ENCODE measurements at regions of chr21 and their contacts with region 1.

Region 1: DNA sequence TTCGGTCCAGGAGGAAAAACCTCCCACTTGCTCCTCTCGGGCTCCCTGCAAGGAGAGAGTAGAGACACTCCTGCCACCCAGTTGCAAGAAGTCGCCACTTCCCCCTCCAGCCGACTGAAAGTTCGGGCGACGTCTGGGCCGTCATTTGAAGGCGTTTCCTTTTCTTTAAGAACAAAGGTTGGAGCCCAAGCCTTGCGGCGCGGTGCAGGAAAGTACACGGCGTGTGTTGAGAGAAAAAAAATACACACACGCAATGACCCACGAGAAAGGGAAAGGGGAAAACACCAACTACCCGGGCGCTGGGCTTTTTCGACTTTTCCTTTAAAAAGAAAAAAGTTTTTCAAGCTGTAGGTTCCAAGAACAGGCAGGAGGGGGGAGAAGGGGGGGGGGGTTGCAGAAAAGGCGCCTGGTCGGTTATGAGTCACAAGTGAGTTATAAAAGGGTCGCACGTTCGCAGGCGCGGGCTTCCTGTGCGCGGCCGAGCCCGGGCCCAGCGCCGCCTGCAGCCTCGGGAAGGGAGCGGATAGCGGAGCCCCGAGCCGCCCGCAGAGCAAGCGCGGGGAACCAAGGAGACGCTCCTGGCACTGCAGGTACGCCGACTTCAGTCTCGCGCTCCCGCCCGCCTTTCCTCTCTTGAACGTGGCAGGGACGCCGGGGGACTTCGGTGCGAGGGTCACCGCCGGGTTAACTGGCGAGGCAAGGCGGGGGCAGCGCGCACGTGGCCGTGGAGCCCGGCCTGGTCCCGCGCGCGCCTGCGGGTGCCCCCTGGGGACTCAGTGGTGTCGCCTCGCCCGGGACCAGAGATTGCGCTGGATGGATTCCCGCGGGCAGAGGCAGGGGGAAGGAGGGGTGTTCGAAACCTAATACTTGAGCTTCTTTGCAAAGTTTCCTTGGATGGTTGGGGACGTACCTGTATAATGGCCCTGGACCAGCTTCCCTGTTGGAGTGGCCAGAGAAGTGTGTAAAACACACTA is 45.3 kb downstream of the MRPL39 start:
- DNase-seq: peak; percentile 40 to 72 (median 47)
- ATAC-seq: peak in 3 of 4 donors; percentile 80 to 83 (median 83)
- H3K4me3 ChIP-seq: peak overlapping the region; percentile 30 to 78 (median 56)
- H3K27ac ChIP-seq: peak overlapping the region in 6 of 12 donors; percentile 16 to 78 (median 46)
- H3K4me1 ChIP-seq: peaks cover 0 to 57% (median 7%) of the 10 kb centered on the region in 12 donors
- H3K27me3 ChIP-seq: no peaks in the 10 kb centered on the region
- CTCF ChIP-seq: peak in 4 of 12 donors; percentile 15 to 38 (median 24)
- POLR2A ChIP-seq: no peak

Region 2: GRCh38 chr21:25421327-25422028 is 140.5 kb before region 1 on chr21:
- intact Hi-C with region 1: loop called in 6 of 10 experiments (anchors 5 to 10 kb)
- DNase-seq: no peak
- ATAC-seq: peak in 1 of 4 donors; percentile 42
- H3K4me3 ChIP-seq: no peak overlapping the region
- H3K27ac ChIP-seq: no peak overlapping the region
- H3K4me1 ChIP-seq: peaks cover 0 to 6% (median 0%) of the 10 kb centered on the region in 12 donors
- H3K27me3 ChIP-seq: peaks cover 0 to 3% (median 0%) of the 10 kb centered on the region in 9 donors
- CTCF ChIP-seq: peak in 11 of 12 donors; percentile 23 to 59 (median 38)
- POLR2A ChIP-seq: no peak

Region 3: DNA sequence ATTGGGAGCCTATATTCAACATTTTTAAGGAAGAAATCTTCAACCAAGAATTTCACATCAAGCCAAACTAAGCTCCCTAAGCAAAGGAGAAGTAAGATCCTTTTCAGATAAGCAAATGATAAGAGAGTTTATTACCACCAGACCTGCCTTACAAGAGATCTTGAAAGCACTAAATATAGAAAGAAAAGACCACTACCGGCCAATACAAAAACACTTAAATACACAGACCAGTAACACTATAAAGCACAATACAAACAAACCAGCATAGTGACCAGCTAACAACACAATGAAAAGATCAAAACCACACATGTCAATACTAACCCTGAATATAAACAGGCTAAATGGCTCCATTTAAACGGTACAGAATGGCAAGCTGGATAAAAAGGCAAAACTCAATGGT is 120.1 kb before region 1 on chr21:
- intact Hi-C with region 1: loop called in 1 of 10 experiments (anchors 10 kb)
- DNase-seq: no peak
- ATAC-seq: no peak
- H3K4me3 ChIP-seq: no peak overlapping the region
- H3K27ac ChIP-seq: no peak overlapping the region
- H3K4me1 ChIP-seq: no peaks in the 10 kb centered on the region
- H3K27me3 ChIP-seq: no peaks in the 10 kb centered on the region
- CTCF ChIP-seq: no peak
- POLR2A ChIP-seq: no peak

Measured in heart left ventricle (tissue), 16 donors.